ENCODE measurements at regions of chr2 and their contacts with region 1.

Region 1: DNA sequence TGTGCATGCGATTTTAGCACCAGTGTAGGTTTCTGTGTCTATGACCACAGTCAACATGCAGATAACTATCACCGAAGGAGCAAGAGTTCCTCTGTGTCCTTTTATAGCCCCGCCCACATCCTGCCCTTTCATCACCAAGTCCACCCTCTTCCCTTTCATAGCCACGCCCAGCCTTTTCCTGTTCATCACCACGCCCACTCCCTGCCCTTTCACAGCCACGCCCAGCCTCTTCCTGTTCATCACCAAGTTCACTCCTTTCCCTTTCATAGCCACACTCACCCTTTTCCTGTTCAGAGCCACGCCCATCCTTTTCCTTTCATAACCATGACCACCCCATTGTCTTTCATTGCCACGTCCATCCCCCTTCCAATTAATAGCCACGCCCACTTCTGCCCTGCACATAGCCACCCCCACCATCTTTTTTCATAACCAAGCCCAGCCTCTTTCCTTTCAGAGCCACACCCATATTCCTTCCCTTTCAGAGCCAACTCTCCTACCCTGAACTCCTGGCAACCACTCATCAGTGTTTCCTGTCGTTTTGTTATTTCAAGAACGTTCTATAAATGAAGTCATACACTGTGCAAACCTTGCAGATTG is 273.9 kb downstream of the MYT1L start:
- DNase-seq: peak; percentile 90

Region 2: GRCh38 chr2:1625208-1625937 is 431.9 kb before region 1 on chr2:
- intact Hi-C with region 1: loop called (anchors 10 kb)
- DNase-seq: peak; percentile 77

Region 3: GRCh38 chr2:2014251-2014771 is 42.9 kb before region 1 on chr2:
- intact Hi-C with region 1: loop called (anchors 1 kb)
- DNase-seq: no peak